Activated CD4-positive, alpha-beta T cell treated with anti-CD3 and anti-CD28 coated beads for 36 hours (primary cell): ENCODE measurements at regions of chr19 and their contacts with region 1.

Region 1: GRCh38 chr19:45001087-45001739 is at the start of gene RELB:
- DNase-seq: peak; percentile 97
- ATAC-seq: peak; percentile 53
- H3K4me3 Mint-ChIP-seq: peak within 1 kb of the TSS; percentile 94
- H3K27ac Mint-ChIP-seq: peak within 1 kb of the TSS; percentile 97
- H3K4me1 Mint-ChIP-seq: peaks cover 16% of the 10 kb centered on the region
- H3K27me3 Mint-ChIP-seq: no peaks in the 10 kb centered on the region
- total RNA-seq, gene RELB: 43.8 to 51.2 TPM

Region 2: DNA sequence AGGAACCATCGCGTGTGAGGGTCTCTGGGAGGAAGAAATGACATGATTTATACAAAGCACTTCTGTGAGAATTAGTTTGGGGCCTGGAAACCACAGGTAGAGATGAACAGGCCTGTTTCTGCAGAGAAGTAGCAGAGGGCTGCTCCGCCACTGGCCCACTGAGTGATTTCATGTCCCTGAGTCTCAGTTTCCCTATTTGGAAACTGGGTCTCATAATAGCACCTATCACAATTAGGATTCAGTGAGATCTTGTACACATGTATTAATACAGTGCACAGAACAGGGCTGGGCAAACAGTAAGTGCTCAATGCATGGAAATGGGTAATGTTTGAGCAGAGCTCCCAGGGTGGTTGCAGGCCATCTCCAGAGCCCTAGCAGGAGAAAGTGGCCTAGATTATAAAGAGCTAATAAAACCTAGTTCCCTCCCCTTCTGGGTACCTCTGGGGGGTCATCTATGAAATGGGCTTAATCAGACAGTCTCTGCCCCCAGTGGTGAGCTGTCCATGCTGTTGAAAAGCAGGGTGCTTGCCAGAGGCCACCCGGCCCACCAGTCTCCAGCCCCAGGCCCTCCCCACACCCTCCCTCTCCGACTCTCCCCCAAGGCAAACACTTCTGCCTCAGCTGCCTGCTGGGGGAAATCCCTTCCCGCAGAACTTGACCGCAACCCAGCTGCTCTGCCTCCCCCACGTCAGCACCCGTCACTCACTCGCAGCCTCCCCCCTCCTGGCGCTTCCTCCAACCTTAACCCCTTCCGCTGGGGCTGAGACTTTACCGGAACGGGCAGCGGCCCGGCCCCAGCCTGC is 248.2 kb before region 1 on chr19:
- CTCF ChIA-PET with region 1: no interaction called
- POLR2A ChIA-PET with region 1: no interaction called
- intact Hi-C with region 1: loop called in 1 of 2 experiments (anchors 1 kb)
- DNase-seq: peak; percentile 98
- ATAC-seq: peak; percentile 79
- H3K4me3 Mint-ChIP-seq: peak overlapping the region; percentile 94
- H3K27ac Mint-ChIP-seq: peak overlapping the region; percentile 97
- H3K4me1 Mint-ChIP-seq: peaks cover 54% of the 10 kb centered on the region
- H3K27me3 Mint-ChIP-seq: no peaks in the 10 kb centered on the region

Region 3: GRCh38 chr19:44912854-44913253 is 88.4 kb before region 1 on chr19:
- CTCF ChIA-PET with region 1: interaction called, 3 read pairs
- POLR2A ChIA-PET with region 1: interaction called, 3 read pairs
- intact Hi-C with region 1: loop called in 1 of 2 experiments (anchors 1 kb)
- DNase-seq: no peak
- ATAC-seq: no peak
- H3K4me3 Mint-ChIP-seq: no peak overlapping the region
- H3K27ac Mint-ChIP-seq: no peak overlapping the region
- H3K4me1 Mint-ChIP-seq: peaks cover 8% of the 10 kb centered on the region
- H3K27me3 Mint-ChIP-seq: peaks cover 27% of the 10 kb centered on the region

Region 4: DNA sequence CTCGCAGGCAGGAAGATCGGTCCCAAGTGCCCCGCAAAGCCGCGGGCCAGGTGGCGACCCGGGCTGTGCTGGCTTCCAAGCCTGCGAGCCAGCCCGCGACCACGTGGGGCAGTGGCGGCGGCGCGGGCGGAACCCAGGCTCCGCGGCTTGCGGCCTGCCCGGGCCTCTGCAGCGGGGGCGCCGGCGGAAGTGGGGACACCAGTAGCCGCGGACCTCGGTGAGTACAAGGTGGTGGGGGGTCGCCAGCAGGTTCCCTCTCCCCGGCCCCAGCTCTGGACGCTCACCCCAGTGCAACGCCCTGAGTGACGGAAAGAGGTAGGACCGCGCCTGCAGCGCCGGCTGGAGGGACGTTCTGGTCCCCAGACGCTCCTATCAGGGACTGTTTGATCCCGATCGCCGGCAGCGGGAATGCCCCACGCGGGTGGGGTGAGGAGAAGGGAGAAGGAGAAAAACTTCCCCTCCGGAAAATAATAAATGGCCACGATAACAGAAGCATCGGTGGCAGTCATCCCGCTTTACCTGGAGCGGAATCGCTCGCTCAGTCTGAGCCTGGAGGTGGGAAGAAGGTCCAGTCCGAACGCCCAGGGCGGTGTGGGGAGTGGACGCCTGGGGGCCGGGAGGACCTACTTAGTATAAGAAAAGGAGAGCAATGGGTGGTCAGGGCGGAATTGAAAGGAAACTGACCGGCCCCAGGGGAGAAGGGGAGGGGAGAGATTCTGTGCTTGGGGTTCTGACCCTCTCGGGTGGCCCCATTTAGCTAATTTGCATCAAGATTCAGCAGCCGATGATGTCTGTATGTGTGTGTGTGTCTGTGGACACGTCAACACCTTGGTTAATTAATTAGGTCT is 78.1 kb after region 1 on chr19 and contains the start of gene GEMIN7:
- CTCF ChIA-PET with region 1: no interaction called
- POLR2A ChIA-PET with region 1: no interaction called
- intact Hi-C with region 1: loop called in 1 of 2 experiments (anchors 1 kb)
- DNase-seq: peak; percentile 90
- ATAC-seq: peak; percentile 65
- H3K4me3 Mint-ChIP-seq: peak within 1 kb of the TSS; percentile 99
- H3K27ac Mint-ChIP-seq: peak within 1 kb of the TSS; percentile 88
- H3K4me1 Mint-ChIP-seq: peaks cover 43% of the 10 kb centered on the region
- H3K27me3 Mint-ChIP-seq: no peaks in the 10 kb centered on the region
- total RNA-seq, gene GEMIN7: 35.4 to 35.5 TPM

Region 5: GRCh38 chr19:45370410-45371204 is 369.4 kb after region 1 on chr19 and contains the start of gene ERCC2:
- CTCF ChIA-PET with region 1: no interaction called
- POLR2A ChIA-PET with region 1: no interaction called
- intact Hi-C with region 1: loop called in 1 of 2 experiments (anchors 1 kb)
- DNase-seq: peak; percentile 100
- ATAC-seq: peak; percentile 100
- H3K4me3 Mint-ChIP-seq: peak within 1 kb of the TSS; percentile 79
- H3K27ac Mint-ChIP-seq: peak within 1 kb of the TSS; percentile 97
- H3K4me1 Mint-ChIP-seq: peaks cover 8% of the 10 kb centered on the region
- H3K27me3 Mint-ChIP-seq: no peaks in the 10 kb centered on the region
- total RNA-seq, gene ERCC2: 27.5 to 30.4 TPM

Region 6: DNA sequence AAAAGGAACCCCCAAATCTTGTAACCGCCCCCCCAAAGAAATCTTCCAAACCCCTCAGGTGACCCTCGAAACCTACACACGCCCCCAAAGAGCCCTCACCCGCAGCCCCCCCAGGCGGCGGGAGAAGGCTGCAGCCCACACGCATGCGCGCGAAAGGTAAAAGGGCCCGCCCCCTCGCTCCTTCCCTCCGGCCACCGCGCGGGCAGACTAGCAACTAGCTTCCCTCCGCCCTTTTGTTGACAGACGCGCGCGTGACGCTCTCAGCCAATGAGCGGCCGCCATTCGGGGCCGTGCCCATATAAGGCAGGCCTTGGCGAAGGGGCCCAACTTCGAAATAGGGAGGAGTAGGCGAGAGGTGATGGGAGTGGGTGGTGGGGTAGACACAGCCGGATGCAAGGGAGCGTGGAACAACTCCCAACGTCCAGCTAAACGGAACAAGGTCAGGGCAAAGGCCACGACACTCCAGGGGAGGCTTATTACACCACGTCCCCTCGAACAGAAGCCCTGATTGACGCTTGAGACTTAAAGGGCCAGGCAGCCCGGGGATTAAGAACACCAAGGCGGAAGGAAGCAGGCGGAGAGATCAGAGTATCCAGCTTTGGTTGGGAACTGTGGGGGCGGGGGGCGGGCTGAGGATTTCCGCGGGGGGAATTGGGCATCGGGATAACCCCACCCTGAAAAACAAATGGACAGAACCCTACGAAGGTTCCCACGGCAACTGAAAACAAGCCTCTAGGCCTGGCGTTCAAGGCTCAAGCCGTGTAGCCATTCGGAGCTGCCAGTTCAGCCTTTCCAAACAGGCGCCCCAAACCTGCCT is 716.2 kb after region 1 on chr19:
- CTCF ChIA-PET with region 1: no interaction called
- POLR2A ChIA-PET with region 1: no interaction called
- intact Hi-C with region 1: loop called in 1 of 2 experiments (anchors 1 kb)
- DNase-seq: peak; percentile 99
- ATAC-seq: peak; percentile 97
- H3K4me3 Mint-ChIP-seq: peak overlapping the region; percentile 93
- H3K27ac Mint-ChIP-seq: peak overlapping the region; percentile 94
- H3K4me1 Mint-ChIP-seq: peaks cover 40% of the 10 kb centered on the region
- H3K27me3 Mint-ChIP-seq: no peaks in the 10 kb centered on the region